ENCODE measurements at regions of chr3 and their contacts with region 1.

Region 1: DNA sequence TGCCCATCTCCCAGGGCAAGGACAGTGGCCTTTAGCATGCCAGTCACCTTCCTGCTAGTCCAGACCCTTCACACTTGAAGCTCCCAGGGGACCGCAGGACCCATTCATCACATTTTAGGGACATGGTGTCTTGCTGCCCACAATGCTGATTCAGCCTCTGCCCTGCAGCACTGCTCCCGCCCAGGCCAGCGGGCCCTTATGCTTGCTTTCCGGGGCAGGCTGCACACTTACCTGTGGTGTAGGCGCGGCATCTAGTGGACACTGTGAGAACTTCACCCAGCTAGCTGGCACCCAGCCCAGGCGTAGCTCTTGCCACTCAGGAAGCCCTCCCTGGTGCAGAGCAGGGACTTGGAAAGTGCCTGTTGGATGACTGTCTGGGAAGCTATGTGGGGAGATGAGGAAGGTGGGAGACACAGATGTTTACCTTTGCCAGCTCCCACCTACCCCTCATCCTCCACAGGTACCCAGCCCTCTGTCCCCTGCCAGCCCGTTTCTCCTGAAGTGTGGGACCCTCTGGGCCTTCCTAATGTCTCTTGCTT is 26.2 kb upstream of the NR2C2 start:
- H3K4me3 Mint-ChIP-seq: no peak overlapping the region
- H3K27ac Mint-ChIP-seq: no peak overlapping the region
- H3K4me1 Mint-ChIP-seq: no peaks in the 10 kb centered on the region
- H3K27me3 Mint-ChIP-seq: no peaks in the 10 kb centered on the region

Region 2: GRCh38 chr3:14633819-14634424 is 287.2 kb before region 1 on chr3:
- intact Hi-C with region 1: loop called (anchors 1 kb)
- H3K4me3 Mint-ChIP-seq: no peak overlapping the region
- H3K27ac Mint-ChIP-seq: no peak overlapping the region
- H3K4me1 Mint-ChIP-seq: no peaks in the 10 kb centered on the region
- H3K27me3 Mint-ChIP-seq: peaks cover 11% of the 10 kb centered on the region

Region 3: GRCh38 chr3:14672588-14672987 is 248.6 kb before region 1 on chr3:
- intact Hi-C with region 1: loop called (anchors 2 kb)
- H3K4me3 Mint-ChIP-seq: no peak overlapping the region
- H3K27ac Mint-ChIP-seq: no peak overlapping the region
- H3K4me1 Mint-ChIP-seq: no peaks in the 10 kb centered on the region
- H3K27me3 Mint-ChIP-seq: no peaks in the 10 kb centered on the region

Region 4: DNA sequence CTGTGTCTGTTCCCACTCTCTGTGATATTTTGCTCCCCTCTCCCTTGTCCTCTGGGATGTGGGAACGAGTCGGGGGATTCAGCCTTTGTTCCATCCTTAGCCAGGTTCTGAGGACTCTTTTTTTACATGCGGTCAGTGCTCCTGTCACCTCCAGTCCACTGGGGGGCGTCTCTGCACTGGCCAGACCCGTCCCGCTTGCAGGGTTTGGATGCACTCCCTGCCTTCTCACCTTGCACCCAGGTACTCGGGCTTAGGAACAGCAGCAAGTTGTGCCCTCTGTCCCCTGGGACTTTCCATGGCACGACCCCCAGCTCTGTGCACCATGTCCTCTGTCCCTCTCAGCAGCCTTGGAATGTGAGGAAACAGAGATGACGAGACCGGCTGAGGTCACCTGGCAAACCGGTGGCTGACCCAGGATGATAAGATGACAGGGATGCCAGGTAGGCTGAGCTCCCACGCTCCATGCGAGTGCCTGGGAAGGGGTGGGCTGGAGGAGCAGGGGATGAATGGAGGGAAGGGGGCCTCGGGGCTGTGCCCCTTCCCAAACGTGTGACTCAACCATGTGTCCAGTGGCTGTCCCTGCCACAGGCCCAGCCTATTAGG is 129.7 kb before region 1 on chr3:
- intact Hi-C with region 1: loop called (anchors 1 kb)
- H3K4me3 Mint-ChIP-seq: no peak overlapping the region
- H3K27ac Mint-ChIP-seq: no peak overlapping the region
- H3K4me1 Mint-ChIP-seq: peaks cover 5% of the 10 kb centered on the region
- H3K27me3 Mint-ChIP-seq: peaks cover 12% of the 10 kb centered on the region

Region 5: DNA sequence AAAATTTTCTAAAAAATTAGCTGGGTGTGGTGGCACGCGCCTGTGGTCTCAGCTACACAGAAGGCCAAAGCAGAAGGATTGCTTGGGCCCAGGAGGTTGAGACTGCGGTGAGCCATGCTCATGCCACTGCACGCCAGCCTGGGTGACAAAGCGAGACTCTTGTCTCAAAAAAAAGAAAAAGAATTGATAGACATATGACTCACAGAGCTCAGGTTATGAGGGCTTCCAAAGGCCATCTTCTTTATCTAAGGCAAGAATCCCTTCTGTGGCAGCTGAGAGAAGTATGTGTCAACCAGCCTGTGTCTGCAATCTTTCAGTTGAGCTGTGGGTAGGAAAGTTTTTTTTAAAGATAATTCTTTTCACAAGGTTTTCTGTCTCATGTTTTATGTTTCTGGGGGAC is 90.0 kb after region 1 on chr3:
- intact Hi-C with region 1: loop called (anchors 5 kb)
- H3K4me3 Mint-ChIP-seq: no peak overlapping the region
- H3K27ac Mint-ChIP-seq: no peak overlapping the region
- H3K4me1 Mint-ChIP-seq: no peaks in the 10 kb centered on the region
- H3K27me3 Mint-ChIP-seq: no peaks in the 10 kb centered on the region